ENCODE measurements at regions of chr6 and their contacts with region 1.

Region 1: GRCh38 chr6:50816115-50816675 is 2.5 kb upstream of the TFAP2B start:
- DNase-seq: peak; percentile 56 to 72
- ATAC-seq: peak in 2 of 4 donors; percentile 55 to 81
- H3K4me3 ChIP-seq: peak overlapping the region; percentile 59
- H3K27ac ChIP-seq: no peak overlapping the region
- H3K4me1 ChIP-seq: peaks cover 4% of the 10 kb centered on the region
- H3K27me3 ChIP-seq: peaks cover 10 to 70% (median 14%) of the 10 kb centered on the region in 3 donors
- CTCF ChIP-seq: peak; percentile 81

Region 2: GRCh38 chr6:50663806-50664205 is 152.4 kb before region 1 on chr6:
- intact Hi-C with region 1: no loop called
- DNase-seq: no peak
- ATAC-seq: no peak
- H3K4me3 ChIP-seq: no peak overlapping the region
- H3K27ac ChIP-seq: no peak overlapping the region
- H3K4me1 ChIP-seq: no peaks in the 10 kb centered on the region
- H3K27me3 ChIP-seq: no peaks in the 10 kb centered on the region
- CTCF ChIP-seq: no peak

Region 3: DNA sequence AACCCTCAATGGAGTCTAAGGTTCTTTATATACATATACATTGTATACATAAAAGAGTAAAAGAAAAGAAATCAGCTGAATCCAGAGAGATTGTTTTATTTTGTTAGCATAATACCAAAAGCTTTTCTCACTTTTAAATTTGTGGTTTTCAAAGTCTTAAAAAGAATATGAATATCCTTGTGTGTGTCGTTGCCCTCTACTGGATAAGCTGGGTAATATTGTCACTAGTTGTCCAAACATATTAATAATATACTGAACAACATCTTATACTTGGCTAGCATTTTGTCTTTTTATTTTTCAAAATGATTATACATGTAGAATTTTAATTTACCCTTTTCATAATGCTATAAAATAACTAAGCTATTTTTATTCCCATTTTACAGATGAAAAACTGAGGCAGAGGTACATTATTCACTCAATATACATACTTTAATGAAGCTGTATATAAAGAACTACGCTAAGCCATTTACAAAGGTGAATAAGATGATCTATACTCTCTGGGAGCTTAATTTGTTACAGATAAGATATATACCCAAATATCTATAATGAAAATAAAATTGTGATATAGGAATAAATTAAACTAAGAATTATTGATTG is 534.2 kb after region 1 on chr6:
- intact Hi-C with region 1: loop called in 1 of 2 experiments (anchors 10 kb)
- DNase-seq: no peak
- ATAC-seq: no peak
- H3K4me3 ChIP-seq: no peak overlapping the region
- H3K27ac ChIP-seq: no peak overlapping the region
- H3K4me1 ChIP-seq: no peaks in the 10 kb centered on the region
- H3K27me3 ChIP-seq: no peaks in the 10 kb centered on the region
- CTCF ChIP-seq: peak; percentile 7

Region 4: DNA sequence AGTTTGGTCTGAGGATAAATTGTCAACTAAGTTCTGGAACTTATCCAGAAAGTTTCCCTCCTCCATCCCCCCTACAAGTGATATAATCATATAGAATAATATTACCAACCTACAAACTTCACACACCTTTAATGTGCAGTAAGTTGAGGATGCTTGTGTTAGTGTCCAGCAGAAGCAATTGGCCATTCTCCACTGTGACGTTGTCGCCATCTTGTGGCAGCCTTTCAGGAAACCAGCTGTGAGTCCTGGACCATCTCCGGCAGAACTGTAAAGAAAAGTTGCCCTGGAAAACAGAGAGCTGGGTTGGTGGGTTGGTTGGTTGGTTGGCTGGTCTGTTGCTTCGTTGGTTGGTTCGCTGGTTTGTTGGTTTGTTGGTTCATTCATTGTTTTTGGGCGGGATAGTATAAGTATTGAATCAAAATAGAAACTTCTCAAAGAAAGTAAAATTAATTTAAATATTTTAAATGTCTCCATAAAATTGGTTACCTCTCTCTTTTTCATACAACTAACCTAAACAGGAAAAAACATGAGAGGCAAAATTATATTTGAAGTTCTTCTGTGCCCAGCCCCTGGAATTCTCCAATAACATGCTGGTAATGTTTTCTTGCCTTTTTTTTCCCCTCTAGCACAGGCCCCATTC is 1143.7 kb after region 1 on chr6:
- intact Hi-C with region 1: loop called (anchors 5 kb)
- DNase-seq: peak; percentile 34 to 59
- ATAC-seq: peak in 1 of 4 donors; percentile 66
- H3K4me3 ChIP-seq: no peak overlapping the region
- H3K27ac ChIP-seq: no peak overlapping the region
- H3K4me1 ChIP-seq: no peaks in the 10 kb centered on the region
- H3K27me3 ChIP-seq: no peaks in the 10 kb centered on the region
- CTCF ChIP-seq: peak; percentile 52